Heart right ventricle (tissue), 16 donors: ENCODE measurements at regions of chrX and their contacts with region 1.

Region 1: GRCh38 chrX:40006106-40007017 is 91.4 kb downstream of the BCOR start:
- DNase-seq: peak; percentile 29 to 74
- ATAC-seq: peak; percentile 50 to 81 (median 74)
- H3K4me3 ChIP-seq: peak overlapping the region in 8 of 10 donors; percentile 0 to 39 (median 27)
- H3K27ac ChIP-seq: peak overlapping the region in 4 of 10 donors; percentile 48 to 64 (median 52)
- H3K4me1 ChIP-seq: peaks cover 0 to 44% (median 19%) of the 10 kb centered on the region in 9 donors
- H3K27me3 ChIP-seq: peaks cover 0 to 87% (median 0%) of the 10 kb centered on the region in 7 donors
- CTCF ChIP-seq: no peak

Region 2: GRCh38 chrX:39907964-39908616 is 98.3 kb before region 1 on chrX:
- intact Hi-C with region 1: loop called in 3 of 10 experiments (anchors 10 kb)
- DNase-seq: peak; percentile 44 to 54
- ATAC-seq: peak; percentile 80 to 94 (median 88)
- H3K4me3 ChIP-seq: no peak overlapping the region
- H3K27ac ChIP-seq: peak overlapping the region in 8 of 10 donors; percentile 25 to 70 (median 34)
- H3K4me1 ChIP-seq: peaks cover 0 to 37% (median 5%) of the 10 kb centered on the region in 9 donors
- H3K27me3 ChIP-seq: peaks cover 0 to 20% (median 0%) of the 10 kb centered on the region in 7 donors
- CTCF ChIP-seq: no peak

Region 3: DNA sequence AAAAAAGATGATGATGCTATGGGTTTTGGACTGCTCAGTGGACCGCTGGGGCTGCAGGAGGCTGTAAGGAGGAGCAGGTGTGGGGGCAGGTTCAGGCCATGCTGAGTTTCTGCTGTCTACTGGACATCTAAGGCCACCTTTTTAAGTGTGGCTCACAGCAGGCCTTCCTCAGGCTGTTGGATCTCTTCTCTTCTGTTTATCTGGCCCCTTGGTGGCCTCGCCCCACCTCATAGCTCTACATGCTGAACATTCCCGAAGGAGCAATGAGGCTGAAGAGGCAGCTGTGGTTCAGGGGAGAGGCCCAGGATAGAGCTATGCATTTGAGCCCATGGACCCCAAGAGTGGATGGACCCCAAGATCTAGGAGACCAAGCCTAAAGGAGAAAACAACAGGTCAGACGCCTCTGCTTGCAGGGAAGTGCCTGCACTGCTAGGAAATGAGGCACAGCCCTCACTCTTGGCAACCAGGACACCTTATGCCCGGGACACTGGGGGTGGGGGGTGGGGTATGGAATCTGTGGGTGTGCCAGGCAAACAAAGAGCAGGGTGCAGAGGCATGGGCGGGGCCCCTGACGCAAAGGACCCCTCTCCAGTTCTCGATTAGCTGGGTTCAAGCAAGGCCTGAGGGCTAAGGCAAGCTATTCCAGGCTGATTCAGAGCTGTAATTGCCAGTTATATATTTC is 77.5 kb before region 1 on chrX:
- intact Hi-C with region 1: loop called in 1 of 10 experiments (anchors 10 kb)
- DNase-seq: no peak
- ATAC-seq: no peak
- H3K4me3 ChIP-seq: no peak overlapping the region
- H3K27ac ChIP-seq: no peak overlapping the region
- H3K4me1 ChIP-seq: peaks cover 0 to 27% (median 9%) of the 10 kb centered on the region in 9 donors
- H3K27me3 ChIP-seq: no peaks in the 10 kb centered on the region
- CTCF ChIP-seq: no peak

Region 4: GRCh38 chrX:40068044-40068443 is 61.7 kb after region 1 on chrX:
- intact Hi-C with region 1: no loop called
- DNase-seq: no peak
- ATAC-seq: no peak
- H3K4me3 ChIP-seq: no peak overlapping the region
- H3K27ac ChIP-seq: no peak overlapping the region
- H3K4me1 ChIP-seq: peaks cover 0 to 6% (median 0%) of the 10 kb centered on the region in 9 donors
- H3K27me3 ChIP-seq: peaks cover 0 to 18% (median 0%) of the 10 kb centered on the region in 7 donors
- CTCF ChIP-seq: peak in 1 of 9 donors; percentile 9